Activated CD4-positive, alpha-beta T cell treated with anti-CD3 and anti-CD28 coated beads, Interleukin-2, amount 10 ng/mL, durations not matched to agents 7 days and 5 days (primary cell): ENCODE measurements at regions of chr3 and their contacts with region 1.

Region 1: DNA sequence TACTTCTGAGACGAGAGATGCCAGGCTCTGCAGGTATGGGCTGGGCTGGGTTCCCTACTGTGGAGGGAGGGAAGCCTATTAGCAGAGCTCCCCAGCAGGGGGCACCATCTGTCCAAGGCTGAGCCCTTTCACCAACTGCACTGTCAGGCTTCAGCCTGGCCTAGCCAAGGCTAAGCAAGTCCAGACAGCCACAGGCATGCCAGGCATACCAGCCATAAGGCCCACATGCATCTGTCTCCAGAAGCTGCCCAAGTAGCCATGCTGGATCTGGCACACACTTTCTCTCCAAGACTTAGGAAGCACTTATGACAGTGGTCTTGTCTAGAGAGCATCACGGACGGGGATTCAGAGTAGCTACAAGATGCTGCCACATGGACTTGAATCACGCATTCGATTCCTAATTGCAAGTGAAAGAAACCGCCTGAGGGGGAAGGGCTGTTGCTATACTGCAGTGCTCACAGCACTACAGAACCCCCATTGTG is 28.3 kb downstream of the RUVBL1 start:
- DNase-seq: peak; percentile 84
- H3K4me3 Mint-ChIP-seq: no peak overlapping the region
- H3K27ac Mint-ChIP-seq: no peak overlapping the region
- H3K4me1 Mint-ChIP-seq: peaks cover 20% of the 10 kb centered on the region
- H3K27me3 Mint-ChIP-seq: no peaks in the 10 kb centered on the region

Region 2: DNA sequence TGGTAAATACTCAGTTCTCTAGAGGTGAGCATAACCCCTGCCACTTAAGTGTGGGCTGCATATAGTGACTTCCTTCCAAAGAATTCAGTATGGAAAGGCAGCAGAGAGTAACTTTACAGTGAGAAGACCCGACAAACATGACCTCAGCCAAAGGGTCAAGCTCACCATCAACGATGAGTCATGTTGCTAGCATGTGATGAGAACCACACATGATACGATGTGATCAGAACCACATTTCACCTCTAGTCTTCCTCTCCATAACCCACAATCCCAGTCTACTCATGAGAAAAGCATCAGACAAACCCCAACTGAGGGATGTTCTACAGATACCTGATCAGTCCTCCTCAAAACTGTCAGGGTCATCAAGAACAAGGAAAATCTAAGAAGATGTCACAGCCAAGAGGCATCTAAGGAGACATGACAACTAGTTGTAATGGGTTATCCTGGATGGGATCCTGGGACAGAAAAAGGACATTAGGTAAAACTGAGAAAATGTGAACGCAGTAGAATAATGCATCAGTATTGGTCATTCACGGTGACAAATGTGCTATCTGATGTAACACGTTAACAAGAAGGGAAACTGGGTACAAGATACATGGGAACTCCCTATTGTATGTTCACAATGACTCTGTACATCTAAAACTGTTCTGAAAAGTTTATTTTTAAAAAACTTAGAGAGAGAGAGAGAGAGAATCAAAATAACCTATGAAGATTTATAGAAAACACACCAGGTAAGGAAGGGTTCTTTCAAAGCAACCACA is 14.8 kb before region 1 on chr3:
- CTCF ChIA-PET with region 1: interaction called, 10 read pairs
- POLR2A ChIA-PET with region 1: no interaction called
- DNase-seq: no peak
- H3K4me3 Mint-ChIP-seq: no peak overlapping the region
- H3K27ac Mint-ChIP-seq: no peak overlapping the region
- H3K4me1 Mint-ChIP-seq: peaks cover 8% of the 10 kb centered on the region
- H3K27me3 Mint-ChIP-seq: peaks cover 4% of the 10 kb centered on the region

Region 3: GRCh38 chr3:128107834-128108233 is 12.6 kb after region 1 on chr3:
- CTCF ChIA-PET with region 1: interaction called, 12 read pairs
- POLR2A ChIA-PET with region 1: no interaction called
- DNase-seq: no peak
- H3K4me3 Mint-ChIP-seq: no peak overlapping the region
- H3K27ac Mint-ChIP-seq: no peak overlapping the region
- H3K4me1 Mint-ChIP-seq: peaks cover 21% of the 10 kb centered on the region
- H3K27me3 Mint-ChIP-seq: no peaks in the 10 kb centered on the region

Region 4: DNA sequence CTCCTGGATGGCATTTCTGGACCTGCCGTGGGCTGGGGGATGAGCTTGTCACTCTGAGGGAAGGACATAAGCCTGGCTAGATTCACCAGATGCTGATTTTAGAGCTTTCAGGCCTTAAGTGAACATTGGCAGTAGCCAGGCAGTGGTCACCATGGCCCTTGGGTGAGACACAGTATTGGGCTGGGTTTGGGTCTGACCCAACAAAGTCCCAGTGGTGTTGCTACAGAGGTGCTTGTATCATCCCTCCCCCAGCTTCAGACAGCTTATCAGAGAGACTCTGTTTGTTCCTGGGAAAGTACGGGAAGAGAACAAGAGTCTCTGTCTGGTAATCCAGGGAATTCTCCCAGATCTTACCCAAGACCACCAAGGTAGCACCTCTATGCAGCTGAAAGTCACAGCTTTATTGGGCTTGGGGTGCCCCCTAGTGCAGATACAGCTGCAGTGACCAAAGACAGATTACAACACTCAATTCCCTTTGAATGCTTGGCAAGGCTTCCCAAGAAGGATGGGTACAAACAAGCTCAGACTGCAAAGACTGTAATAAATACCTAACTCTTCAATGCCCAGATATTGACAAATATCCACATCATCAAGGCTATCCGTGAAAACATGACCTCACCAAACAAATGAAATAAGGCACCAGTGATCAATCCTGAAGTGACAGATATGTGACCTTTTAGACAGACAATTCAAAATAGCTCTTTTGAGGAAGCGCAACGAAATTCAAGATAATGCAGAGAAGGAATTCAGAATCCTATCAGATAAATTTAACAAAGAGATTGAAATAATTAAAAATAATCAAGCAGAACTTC is 38.2 kb after region 1 on chr3:
- CTCF ChIA-PET with region 1: interaction called, 63 read pairs
- POLR2A ChIA-PET with region 1: no interaction called
- DNase-seq: peak; percentile 46
- H3K4me3 Mint-ChIP-seq: no peak overlapping the region
- H3K27ac Mint-ChIP-seq: no peak overlapping the region
- H3K4me1 Mint-ChIP-seq: no peaks in the 10 kb centered on the region
- H3K27me3 Mint-ChIP-seq: peaks cover 17% of the 10 kb centered on the region